ENCODE measurements at regions of chr6 and their contacts with region 1.

Region 1: GRCh38 chr6:70369332-70369950 is 43.9 kb upstream of the FAM135A start:
- DNase-seq: peak; percentile 27 to 73 (median 59)
- ATAC-seq: peak; percentile 94
- H3K4me3 ChIP-seq: no peak overlapping the region
- H3K4me3 Mint-ChIP-seq: no peak overlapping the region
- H3K27ac ChIP-seq: no peak overlapping the region
- H3K27ac Mint-ChIP-seq: no peak overlapping the region
- H3K4me1 ChIP-seq: no peaks in the 10 kb centered on the region
- H3K4me1 Mint-ChIP-seq: no peaks in the 10 kb centered on the region
- H3K27me3 ChIP-seq: peaks cover 0 to 3% of the 10 kb centered on the region in 2 experiments
- H3K27me3 Mint-ChIP-seq: peaks cover 19% of the 10 kb centered on the region
- CTCF ChIP-seq: peak; percentile 79

Region 2: GRCh38 chr6:70221025-70221714 is 148.3 kb before region 1 on chr6:
- CTCF ChIA-PET with region 1: interaction called, 9 read pairs
- POLR2A ChIA-PET with region 1: no interaction called
- intact Hi-C with region 1: loop called (anchors 1 to 5 kb)
- DNase-seq: peak in 2 of 9 experiments; percentile 17 to 32
- ATAC-seq: peak; percentile 49
- H3K4me3 ChIP-seq: no peak overlapping the region
- H3K4me3 Mint-ChIP-seq: no peak overlapping the region
- H3K27ac ChIP-seq: no peak overlapping the region
- H3K27ac Mint-ChIP-seq: no peak overlapping the region
- H3K4me1 ChIP-seq: no peaks in the 10 kb centered on the region
- H3K4me1 Mint-ChIP-seq: no peaks in the 10 kb centered on the region
- H3K27me3 ChIP-seq: no peaks in the 10 kb centered on the region
- H3K27me3 Mint-ChIP-seq: peaks cover 18% of the 10 kb centered on the region
- CTCF ChIP-seq: peak; percentile 88

Region 3: DNA sequence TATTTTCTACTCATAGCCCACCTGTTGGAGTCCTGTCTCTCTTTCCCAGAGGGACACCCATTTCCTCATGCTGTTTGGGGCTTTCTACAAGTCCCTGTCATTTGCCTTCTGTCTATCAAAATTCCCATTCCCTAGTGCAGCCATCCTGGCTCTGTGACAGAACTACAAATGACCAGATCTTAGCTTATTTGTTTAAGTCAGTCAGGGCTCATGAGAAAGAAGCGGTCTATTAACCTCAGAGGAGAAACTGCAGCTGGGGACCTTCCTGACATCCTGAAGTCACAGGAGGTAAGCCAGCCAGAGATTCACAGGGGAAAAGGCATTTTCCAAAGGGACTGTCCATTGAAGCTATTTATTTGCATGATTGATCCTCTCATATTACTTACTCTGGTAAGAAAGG is 64.8 kb before region 1 on chr6:
- CTCF ChIA-PET with region 1: interaction called, 5 read pairs
- POLR2A ChIA-PET with region 1: interaction called, 3 read pairs
- intact Hi-C with region 1: loop called in 1 of 2 experiments (anchors 5 kb)
- DNase-seq: no peak
- ATAC-seq: no peak
- H3K4me3 ChIP-seq: no peak overlapping the region
- H3K4me3 Mint-ChIP-seq: no peak overlapping the region
- H3K27ac ChIP-seq: no peak overlapping the region
- H3K27ac Mint-ChIP-seq: no peak overlapping the region
- H3K4me1 ChIP-seq: no peaks in the 10 kb centered on the region
- H3K4me1 Mint-ChIP-seq: no peaks in the 10 kb centered on the region
- H3K27me3 ChIP-seq: no peaks in the 10 kb centered on the region
- H3K27me3 Mint-ChIP-seq: peaks cover 16% of the 10 kb centered on the region
- CTCF ChIP-seq: no peak

Region 4: DNA sequence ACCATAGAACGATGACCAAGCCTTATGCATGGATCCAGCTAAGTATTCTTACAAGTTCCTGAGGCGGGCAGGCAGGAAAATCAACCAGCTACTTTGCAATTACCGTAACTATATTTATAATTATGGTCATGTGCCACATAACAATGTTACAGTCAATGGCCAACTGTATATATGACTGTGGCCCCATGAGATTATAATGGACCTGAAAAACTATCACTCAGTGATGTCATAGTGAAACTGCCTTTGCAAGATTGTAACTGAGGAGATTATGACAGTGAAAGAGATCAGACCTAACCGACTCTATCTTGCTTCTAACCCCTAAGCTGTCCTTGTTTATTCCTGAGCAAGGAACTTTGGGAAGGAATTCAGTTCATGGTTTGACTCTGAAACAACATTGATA is 10.8 kb after region 1 on chr6:
- CTCF ChIA-PET with region 1: interaction called, 12 read pairs
- POLR2A ChIA-PET with region 1: interaction called, 3 read pairs
- intact Hi-C with region 1: no loop called
- DNase-seq: no peak
- ATAC-seq: no peak
- H3K4me3 ChIP-seq: no peak overlapping the region
- H3K4me3 Mint-ChIP-seq: no peak overlapping the region
- H3K27ac ChIP-seq: no peak overlapping the region
- H3K27ac Mint-ChIP-seq: no peak overlapping the region
- H3K4me1 ChIP-seq: no peaks in the 10 kb centered on the region
- H3K4me1 Mint-ChIP-seq: no peaks in the 10 kb centered on the region
- H3K27me3 ChIP-seq: no peaks in the 10 kb centered on the region
- H3K27me3 Mint-ChIP-seq: peaks cover 12% of the 10 kb centered on the region
- CTCF ChIP-seq: no peak

Region 5: GRCh38 chr6:70385901-70386300 is 16.5 kb after region 1 on chr6:
- CTCF ChIA-PET with region 1: interaction called, 12 read pairs
- POLR2A ChIA-PET with region 1: interaction called, 3 read pairs
- intact Hi-C with region 1: no loop called
- DNase-seq: no peak
- ATAC-seq: no peak
- H3K4me3 ChIP-seq: no peak overlapping the region
- H3K4me3 Mint-ChIP-seq: no peak overlapping the region
- H3K27ac ChIP-seq: no peak overlapping the region
- H3K27ac Mint-ChIP-seq: no peak overlapping the region
- H3K4me1 ChIP-seq: no peaks in the 10 kb centered on the region
- H3K4me1 Mint-ChIP-seq: no peaks in the 10 kb centered on the region
- H3K27me3 ChIP-seq: no peaks in the 10 kb centered on the region
- H3K27me3 Mint-ChIP-seq: peaks cover 6% of the 10 kb centered on the region
- CTCF ChIP-seq: no peak

Region 6: DNA sequence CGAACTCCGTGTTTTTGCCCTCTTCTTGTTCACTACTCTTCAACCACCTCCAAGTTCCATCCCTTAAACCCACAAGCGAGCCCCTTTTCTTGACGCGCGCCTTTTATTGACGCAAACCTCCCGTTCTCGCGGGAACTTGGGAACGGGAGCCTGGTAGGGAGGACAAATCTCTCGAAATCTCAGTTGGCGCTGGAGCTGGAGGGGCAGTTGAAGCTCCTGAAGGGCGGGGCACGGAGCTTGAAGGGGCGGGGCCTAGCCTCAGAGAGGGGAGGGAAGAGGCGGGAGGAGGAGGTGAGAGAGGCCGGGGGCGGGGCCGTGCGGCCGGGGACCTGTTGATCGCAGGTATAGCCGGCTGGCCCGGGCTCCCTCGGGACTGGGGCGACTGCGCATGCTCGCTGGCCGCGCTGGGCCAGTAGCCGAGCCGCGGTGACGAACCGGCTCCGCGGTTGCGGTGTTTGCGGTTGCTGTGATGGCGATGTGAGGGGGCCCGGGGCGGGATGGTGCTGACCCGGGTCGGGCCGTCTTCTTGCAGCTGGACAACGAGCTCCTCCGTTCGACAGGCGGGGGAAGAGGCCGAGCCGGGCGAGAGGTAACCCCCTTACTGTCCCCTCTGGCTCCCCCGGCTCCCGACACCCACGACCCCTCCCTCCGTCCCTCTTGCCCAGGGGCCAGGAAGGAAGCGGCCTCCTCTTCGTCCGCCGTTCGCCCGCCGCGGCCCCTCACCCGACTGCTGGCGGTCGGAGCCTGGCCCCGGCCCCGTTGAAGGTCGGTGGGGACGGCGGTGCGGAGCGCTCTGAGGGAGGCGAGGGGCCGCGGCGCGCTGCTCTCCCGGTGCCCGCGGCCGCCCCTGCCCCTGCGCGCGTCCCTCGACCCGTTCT is 43.9 kb after region 1 on chr6 and contains the start of gene FAM135A:
- CTCF ChIA-PET with region 1: interaction called, 4 read pairs
- POLR2A ChIA-PET with region 1: interaction called, 3 read pairs
- intact Hi-C with region 1: loop called in 1 of 2 experiments (anchors 2 kb)
- DNase-seq: peak; percentile 85 to 96 (median 93)
- ATAC-seq: peak; percentile 96
- H3K4me3 ChIP-seq: peak within 1 kb of the TSS; percentile 65 to 72
- H3K4me3 Mint-ChIP-seq: peak within 1 kb of the TSS; percentile 91
- H3K27ac ChIP-seq: peak within 1 kb of the TSS; percentile 47 to 63
- H3K27ac Mint-ChIP-seq: peak within 1 kb of the TSS; percentile 91
- H3K4me1 ChIP-seq: peaks cover 8% of the 10 kb centered on the region
- H3K4me1 Mint-ChIP-seq: peaks cover 24% of the 10 kb centered on the region
- H3K27me3 ChIP-seq: no peaks in the 10 kb centered on the region
- H3K27me3 Mint-ChIP-seq: no peaks in the 10 kb centered on the region
- CTCF ChIP-seq: no peak
- total RNA-seq, gene FAM135A: 5.8 to 6.5 TPM